ENCODE measurements at regions of chr1 and their contacts with region 1.

Region 1: DNA sequence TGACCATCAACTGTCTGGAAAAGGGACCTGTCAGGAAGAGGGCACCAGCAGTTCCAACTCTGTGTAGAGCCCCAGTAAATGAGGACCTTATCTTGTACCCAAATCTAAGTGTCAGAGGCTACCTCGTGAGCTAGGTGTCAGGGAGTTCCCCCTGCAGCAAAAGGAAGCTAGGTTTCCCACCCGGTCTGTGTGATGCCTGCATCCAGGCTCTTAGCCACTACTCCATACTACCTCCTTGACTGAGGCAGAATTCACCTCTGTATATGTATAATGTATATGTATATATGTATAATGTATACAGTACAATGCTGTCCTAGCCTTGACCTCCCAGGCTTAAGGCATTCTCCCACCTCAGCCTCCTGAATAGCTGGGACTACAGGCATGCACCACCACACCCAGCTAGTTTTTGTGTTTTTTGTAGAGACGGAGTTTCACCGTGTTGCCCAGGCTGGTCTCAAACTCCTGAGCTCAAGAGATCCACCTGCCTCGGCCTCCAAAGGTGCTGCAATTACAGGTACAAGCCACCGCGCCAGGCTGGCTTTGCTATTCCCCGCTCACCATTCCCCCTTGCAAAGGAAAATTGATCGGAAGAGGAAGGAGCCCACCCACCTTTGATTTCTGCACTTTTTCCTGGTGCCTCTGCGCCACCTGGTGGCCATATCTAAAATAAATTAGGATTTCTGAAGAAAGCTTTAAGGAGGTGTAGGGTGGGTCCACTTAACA is 15.7 kb upstream of the LUZP1 start:
- DNase-seq: peak; percentile 64
- H3K4me3 ChIP-seq: peak overlapping the region; percentile 15 to 51; a peak in 3 of 4 replicates
- H3K27ac ChIP-seq: no peak overlapping the region
- H3K4me1 ChIP-seq: peaks cover 0 to 7% of the 10 kb centered on the region in 2 experiments; a peak in 3 of 4 replicates
- H3K27me3 ChIP-seq: no peaks in the 10 kb centered on the region
- CTCF ChIP-seq: peak; percentile 90
- EP300 ChIP-seq: no peak
- RAD21 ChIP-seq: peak; percentile 89

Region 2: GRCh38 chr1:22983934-22984333 is 200.4 kb before region 1 on chr1:
- CTCF ChIA-PET with region 1: interaction called, 159 read pairs
- POLR2A ChIA-PET with region 1: no interaction called
- DNase-seq: no peak
- H3K4me3 ChIP-seq: no peak overlapping the region
- H3K27ac ChIP-seq: no peak overlapping the region
- H3K4me1 ChIP-seq: no peaks in the 10 kb centered on the region
- H3K27me3 ChIP-seq: no peaks in the 10 kb centered on the region; the same call in 1 of the 2 replicates
- CTCF ChIP-seq: no peak
- EP300 ChIP-seq: no peak
- RAD21 ChIP-seq: no peak

Region 3: GRCh38 chr1:23065385-23065784 is 119.0 kb before region 1 on chr1:
- CTCF ChIA-PET with region 1: interaction called, 10 read pairs
- POLR2A ChIA-PET with region 1: no interaction called
- DNase-seq: peak; percentile 48
- H3K4me3 ChIP-seq: no peak overlapping the region
- H3K27ac ChIP-seq: peak overlapping the region in 1 of 2 experiments; percentile 0; a peak in 1 of 4 replicates
- H3K4me1 ChIP-seq: peaks cover 0 to 9% of the 10 kb centered on the region in 2 experiments; a peak in 2 of 4 replicates
- H3K27me3 ChIP-seq: no peaks in the 10 kb centered on the region
- CTCF ChIP-seq: no peak
- EP300 ChIP-seq: peak in 1 of 2 experiments; percentile 45; a peak in 1 of 4 replicates
- RAD21 ChIP-seq: no peak

Region 4: GRCh38 chr1:23122023-23122748 is 62.2 kb before region 1 on chr1:
- CTCF ChIA-PET with region 1: interaction called, 33 read pairs
- POLR2A ChIA-PET with region 1: no interaction called
- DNase-seq: no peak
- H3K4me3 ChIP-seq: no peak overlapping the region
- H3K27ac ChIP-seq: peak overlapping the region; percentile 47 to 52; a peak in 3 of 4 replicates
- H3K4me1 ChIP-seq: peaks cover 6 to 27% of the 10 kb centered on the region in 2 experiments; a peak in 3 of 4 replicates
- H3K27me3 ChIP-seq: no peaks in the 10 kb centered on the region
- CTCF ChIP-seq: no peak
- EP300 ChIP-seq: no peak
- RAD21 ChIP-seq: no peak

Region 5: GRCh38 chr1:23163395-23163794 is 21.0 kb before region 1 on chr1:
- CTCF ChIA-PET with region 1: interaction called, 96 read pairs
- POLR2A ChIA-PET with region 1: no interaction called
- DNase-seq: no peak
- H3K4me3 ChIP-seq: no peak overlapping the region
- H3K27ac ChIP-seq: no peak overlapping the region
- H3K4me1 ChIP-seq: peaks cover 5 to 14% of the 10 kb centered on the region in 2 experiments; a peak in 2 of 4 replicates
- H3K27me3 ChIP-seq: no peaks in the 10 kb centered on the region
- CTCF ChIP-seq: no peak
- EP300 ChIP-seq: no peak
- RAD21 ChIP-seq: no peak

Region 6: DNA sequence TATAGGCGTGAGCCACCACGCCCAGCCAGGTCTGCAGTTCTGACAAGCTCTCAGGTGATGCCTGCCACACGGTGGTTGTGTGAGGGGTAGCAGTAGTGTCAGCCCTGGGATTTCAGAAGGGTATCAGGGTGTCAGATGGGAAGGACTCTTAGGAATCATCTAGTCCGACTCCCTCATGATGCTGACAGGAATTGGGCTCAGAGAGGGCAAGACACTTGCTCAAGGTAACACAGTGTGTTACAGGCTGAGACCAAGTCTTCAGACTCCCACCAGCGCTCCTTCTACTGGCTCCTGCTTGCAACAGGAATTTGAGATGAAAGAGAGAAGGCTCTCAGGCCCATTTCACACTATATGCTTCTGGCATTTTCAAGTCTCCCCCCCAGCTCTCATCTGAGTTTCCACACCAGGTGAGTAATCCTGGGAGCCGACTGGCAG is 26.0 kb after region 1 on chr1:
- CTCF ChIA-PET with region 1: interaction called, 28 read pairs
- POLR2A ChIA-PET with region 1: no interaction called
- DNase-seq: no peak
- H3K4me3 ChIP-seq: no peak overlapping the region
- H3K27ac ChIP-seq: no peak overlapping the region
- H3K4me1 ChIP-seq: no peaks in the 10 kb centered on the region
- H3K27me3 ChIP-seq: no peaks in the 10 kb centered on the region
- CTCF ChIP-seq: peak; percentile 21; the same call in 1 of the 2 replicates
- EP300 ChIP-seq: no peak
- RAD21 ChIP-seq: no peak